ENCODE measurements at regions of chr13 and their contacts with region 1.

Region 1: DNA sequence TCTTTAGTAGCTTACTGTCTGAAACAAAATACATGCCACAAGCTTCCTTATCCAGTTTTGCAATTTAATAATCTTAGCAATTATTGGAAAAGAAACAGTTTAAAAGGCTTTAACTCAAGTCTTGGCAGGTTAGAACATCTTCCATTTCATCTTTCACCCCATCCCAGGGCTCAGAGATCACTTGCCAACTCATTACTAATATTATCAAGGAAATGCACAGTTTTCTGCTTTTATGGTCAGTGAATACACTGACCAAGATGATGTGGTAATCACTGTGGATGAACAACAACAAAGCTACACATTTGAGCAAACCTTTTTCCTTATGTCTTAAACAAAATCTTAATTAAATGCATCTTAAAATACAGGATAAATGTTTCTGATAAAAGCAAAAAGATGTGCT is 48.0 kb upstream of the ITM2B start:
- DNase-seq: no peak
- ATAC-seq: no peak
- H3K4me3 Mint-ChIP-seq: peak overlapping the region; percentile 11
- H3K27ac Mint-ChIP-seq: peak overlapping the region; percentile 82
- H3K4me1 Mint-ChIP-seq: peaks cover 60% of the 10 kb centered on the region
- H3K27me3 Mint-ChIP-seq: no peaks in the 10 kb centered on the region
- CTCF ChIP-seq: no peak

Region 2: DNA sequence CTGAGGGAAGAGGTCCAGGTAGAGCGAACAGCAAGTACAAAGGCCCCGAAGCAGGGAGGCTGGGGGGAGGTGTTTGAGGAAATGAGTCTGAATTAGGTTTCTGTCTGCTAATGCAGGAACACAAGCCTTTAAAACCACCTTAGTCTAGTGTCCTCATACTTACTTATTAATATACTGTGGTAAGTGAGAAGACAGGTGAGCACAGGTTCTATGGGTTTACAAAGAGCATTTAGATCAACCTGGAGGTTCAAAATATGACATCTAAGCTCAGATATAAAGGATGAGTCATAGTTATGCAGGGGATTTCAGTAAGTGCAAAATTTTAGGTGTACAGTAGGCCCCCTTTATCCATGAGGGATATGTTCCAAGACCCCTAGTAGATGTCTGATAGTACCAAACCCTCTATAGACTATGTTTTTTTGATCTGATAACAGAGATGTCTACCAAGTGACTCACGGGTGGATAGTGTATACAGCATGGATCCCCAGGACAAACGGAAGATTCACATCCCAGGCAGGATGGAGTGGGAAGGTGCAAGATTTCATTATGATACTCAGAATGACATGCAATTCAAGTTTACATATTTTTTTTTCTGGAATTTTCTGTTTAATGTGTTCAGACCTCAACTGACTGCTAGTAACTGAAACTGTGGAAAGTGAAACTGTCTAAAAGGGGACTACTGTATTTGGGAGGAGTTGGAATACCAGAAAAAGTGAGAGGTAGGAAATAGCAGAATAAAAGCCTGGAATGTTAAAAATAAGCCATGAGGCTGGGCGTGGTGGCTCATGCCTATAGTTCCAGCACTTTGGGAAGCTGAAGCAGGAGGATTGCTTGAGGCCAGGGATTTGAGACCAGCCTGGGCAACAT is 71.9 kb before region 1 on chr13:
- CTCF ChIA-PET with region 1: no interaction called
- POLR2A ChIA-PET with region 1: no interaction called
- intact Hi-C with region 1: no loop called
- DNase-seq: no peak
- ATAC-seq: peak; percentile 66
- H3K4me3 Mint-ChIP-seq: no peak overlapping the region
- H3K27ac Mint-ChIP-seq: no peak overlapping the region
- H3K4me1 Mint-ChIP-seq: peaks cover 13% of the 10 kb centered on the region
- H3K27me3 Mint-ChIP-seq: peaks cover 2% of the 10 kb centered on the region
- CTCF ChIP-seq: no peak

Region 3: GRCh38 chr13:48155848-48156247 is 29.2 kb before region 1 on chr13:
- CTCF ChIA-PET with region 1: interaction called, 5 read pairs
- POLR2A ChIA-PET with region 1: interaction called, 3 read pairs
- intact Hi-C with region 1: loop called (anchors 1 kb)
- DNase-seq: peak; percentile 38
- ATAC-seq: peak; percentile 65
- H3K4me3 Mint-ChIP-seq: peak overlapping the region; percentile 67
- H3K27ac Mint-ChIP-seq: peak overlapping the region; percentile 97
- H3K4me1 Mint-ChIP-seq: peaks cover 84% of the 10 kb centered on the region
- H3K27me3 Mint-ChIP-seq: no peaks in the 10 kb centered on the region
- CTCF ChIP-seq: no peak

Measured in activated CD8-positive, alpha-beta T cell treated with anti-CD3 and anti-CD28 coated beads for 36 hours (primary cell).